HEK293 (cell line): ENCODE measurements at regions of chr1 and their contacts with region 1.

Region 1: GRCh38 chr1:45170151-45170742 is 36.2 kb downstream of the ZSWIM5 start:
- H3K4me3 ChIP-seq: no peak overlapping the region
- H3K27ac ChIP-seq: no peak overlapping the region
- H3K4me1 ChIP-seq: peaks cover 18% of the 10 kb centered on the region; the same call in 1 of the 2 replicates
- CTCF ChIP-seq: no peak

Region 2: DNA sequence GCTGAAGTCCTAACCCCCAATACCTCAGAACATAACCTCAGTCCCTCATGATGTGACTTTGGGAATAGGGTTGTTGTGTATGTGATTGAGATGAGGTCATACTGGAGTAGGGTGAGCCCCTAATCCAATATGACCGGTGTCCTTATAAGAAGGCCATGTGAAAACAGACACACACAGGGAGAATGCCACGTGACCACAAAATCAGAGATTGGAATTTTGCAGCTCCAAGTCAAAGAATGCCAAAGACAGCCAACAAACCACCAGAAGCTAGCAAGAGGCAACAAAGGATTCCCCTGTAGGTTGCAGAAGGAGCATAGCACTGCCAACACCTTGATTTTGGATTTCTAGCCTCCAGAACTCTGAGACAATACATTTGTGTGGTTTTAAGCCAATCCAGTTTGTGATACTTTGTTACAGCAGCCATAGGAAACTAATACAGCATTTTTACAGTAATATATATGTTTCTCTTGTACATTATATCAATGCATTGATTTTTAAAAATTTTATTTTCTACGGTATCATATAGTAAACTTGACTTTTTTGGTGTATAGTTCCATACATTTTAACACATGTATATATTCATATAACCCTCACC is 30.8 kb after region 1 on chr1:
- CTCF ChIA-PET with region 1: no interaction called
- POLR2A ChIA-PET with region 1: interaction called, 10 read pairs
- H3K4me3 ChIP-seq: no peak overlapping the region
- H3K27ac ChIP-seq: no peak overlapping the region
- H3K4me1 ChIP-seq: peaks cover 10% of the 10 kb centered on the region
- CTCF ChIP-seq: no peak